ENCODE measurements at regions of chr13 and their contacts with region 1.

Region 1: GRCh38 chr13:99505814-99506269 is 4.6 kb downstream of the TM9SF2 start:
- DNase-seq: no peak
- ATAC-seq: no peak

Region 2: GRCh38 chr13:99442273-99442895 is 63.5 kb before region 1 on chr13:
- intact Hi-C with region 1: loop called in 1 of 2 experiments (anchors 5 kb)
- DNase-seq: no peak
- ATAC-seq: peak; percentile 66

Measured in left colon (tissue), 2 donors.